AG04449 (cell line): ENCODE measurements at regions of chr14 and their contacts with region 1.

Region 1: GRCh38 chr14:24299255-24300195 is at the starts of genes DHRS1 and NOP9:
- DNase-seq: peak; percentile 24
- H3K4me3 ChIP-seq: peak within 1 kb of the TSS; percentile 99
- CTCF ChIP-seq: no peak

Region 2: GRCh38 chr14:24146978-24147760 is 152.4 kb before region 1 on chr14 and contains the start of gene RNF31:
- CTCF ChIA-PET with region 1: interaction called, 11 read pairs
- POLR2A ChIA-PET with region 1: no interaction called
- DNase-seq: peak; percentile 88
- H3K4me3 ChIP-seq: peak within 1 kb of the TSS; percentile 92
- CTCF ChIP-seq: no peak

Region 3: DNA sequence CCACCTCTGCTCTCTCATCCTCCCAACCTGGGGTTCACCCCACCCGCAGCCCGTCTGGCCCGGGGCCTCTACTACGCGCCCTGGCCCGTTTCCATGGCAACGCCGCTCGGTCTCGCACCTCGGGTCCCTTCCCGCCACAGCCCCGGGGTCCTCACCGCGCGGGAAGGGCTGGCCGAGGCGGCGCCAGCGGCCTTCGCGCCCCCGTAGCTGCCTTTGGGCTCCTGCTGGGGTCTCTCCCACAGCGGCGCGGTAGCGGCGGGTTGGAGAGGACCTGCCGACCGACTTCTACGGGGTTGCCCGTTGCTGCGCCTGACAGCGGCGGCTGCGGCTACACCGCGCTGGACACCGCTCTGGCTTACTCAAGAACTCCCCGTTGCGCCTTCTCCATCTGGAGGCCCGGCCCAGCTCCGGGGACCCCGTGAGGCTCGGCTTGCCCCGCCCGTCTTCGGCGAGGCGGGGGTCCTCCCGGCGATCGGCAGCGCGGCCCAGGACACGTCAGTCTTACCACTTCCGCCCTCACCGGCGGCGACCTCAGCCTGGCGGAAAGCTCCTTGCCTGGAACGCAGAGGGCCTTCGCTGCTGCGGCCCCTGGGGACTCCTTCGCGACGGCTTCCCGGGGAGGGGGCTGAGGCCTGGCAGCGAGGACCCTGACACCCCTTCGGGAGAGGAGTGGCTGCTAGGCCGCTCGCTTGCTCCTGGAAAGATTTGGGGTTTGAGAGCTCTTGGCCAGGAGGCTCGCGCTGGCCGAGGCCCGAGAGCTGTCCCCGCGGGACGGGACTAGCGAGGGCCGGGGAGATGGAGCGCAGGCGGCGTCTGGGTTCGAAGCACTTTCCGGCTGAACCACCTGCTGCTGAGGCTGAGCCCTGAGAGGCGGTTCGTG is 104.1 kb before region 1 on chr14 and contains the start of gene TM9SF1:
- CTCF ChIA-PET with region 1: interaction called, 21 read pairs
- POLR2A ChIA-PET with region 1: interaction called, 3 read pairs
- DNase-seq: peak; percentile 34
- H3K4me3 ChIP-seq: peak within 1 kb of the TSS; percentile 92
- CTCF ChIP-seq: no peak

Region 4: GRCh38 chr14:24224618-24225071 is 74.9 kb before region 1 on chr14:
- CTCF ChIA-PET with region 1: interaction called, 38 read pairs
- POLR2A ChIA-PET with region 1: interaction called, 3 read pairs
- DNase-seq: no peak
- H3K4me3 ChIP-seq: no peak overlapping the region
- CTCF ChIP-seq: no peak

Region 5: GRCh38 chr14:24271134-24271833 is 28.2 kb before region 1 on chr14 and contains the start of gene RABGGTA:
- CTCF ChIA-PET with region 1: interaction called, 46 read pairs
- POLR2A ChIA-PET with region 1: interaction called, 11 read pairs
- DNase-seq: no peak
- H3K4me3 ChIP-seq: peak within 1 kb of the TSS; percentile 98
- CTCF ChIP-seq: peak; percentile 97

Region 6: GRCh38 chr14:24347134-24347533 is 47.6 kb after region 1 on chr14:
- CTCF ChIA-PET with region 1: no interaction called
- POLR2A ChIA-PET with region 1: no interaction called
- DNase-seq: no peak
- H3K4me3 ChIP-seq: no peak overlapping the region
- CTCF ChIP-seq: no peak

Region 7: DNA sequence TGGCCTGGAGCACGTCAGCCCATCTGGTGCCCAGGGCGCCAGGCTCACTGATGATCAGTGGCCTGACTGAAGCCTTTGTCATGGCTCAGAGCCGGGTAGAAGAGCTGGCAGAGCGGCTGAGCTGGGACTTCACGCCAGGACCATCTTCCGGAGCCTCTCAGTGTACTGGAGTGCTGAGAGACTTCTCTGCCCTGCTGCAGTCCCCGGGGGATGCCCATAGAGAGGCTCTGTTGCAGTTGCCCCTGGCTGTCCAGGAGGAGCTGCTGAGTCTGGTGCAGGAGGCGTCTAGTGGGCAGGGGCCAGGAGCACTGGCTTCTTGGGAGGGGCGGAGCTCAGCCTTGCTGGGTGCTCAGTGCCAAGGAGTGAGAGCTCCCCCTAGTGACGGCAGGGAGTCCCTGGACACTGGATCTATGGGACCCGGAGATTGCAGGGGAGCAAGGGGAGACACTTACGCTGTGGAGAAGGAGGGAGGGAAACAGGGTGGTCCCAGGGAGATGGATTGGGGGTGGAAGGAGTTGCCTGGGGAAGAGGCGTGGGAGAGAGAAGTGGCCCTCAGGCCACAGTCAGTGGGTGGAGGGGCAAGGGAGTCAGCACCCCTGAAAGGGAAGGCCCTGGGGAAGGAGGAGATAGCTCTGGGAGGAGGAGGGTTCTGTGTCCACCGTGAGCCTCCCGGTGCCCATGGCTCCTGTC is 132.2 kb after region 1 on chr14:
- CTCF ChIA-PET with region 1: interaction called, 380 read pairs
- POLR2A ChIA-PET with region 1: interaction called, 3 read pairs
- DNase-seq: peak; percentile 55
- H3K4me3 ChIP-seq: peak overlapping the region; percentile 88
- CTCF ChIP-seq: peak; percentile 95

Region 8: DNA sequence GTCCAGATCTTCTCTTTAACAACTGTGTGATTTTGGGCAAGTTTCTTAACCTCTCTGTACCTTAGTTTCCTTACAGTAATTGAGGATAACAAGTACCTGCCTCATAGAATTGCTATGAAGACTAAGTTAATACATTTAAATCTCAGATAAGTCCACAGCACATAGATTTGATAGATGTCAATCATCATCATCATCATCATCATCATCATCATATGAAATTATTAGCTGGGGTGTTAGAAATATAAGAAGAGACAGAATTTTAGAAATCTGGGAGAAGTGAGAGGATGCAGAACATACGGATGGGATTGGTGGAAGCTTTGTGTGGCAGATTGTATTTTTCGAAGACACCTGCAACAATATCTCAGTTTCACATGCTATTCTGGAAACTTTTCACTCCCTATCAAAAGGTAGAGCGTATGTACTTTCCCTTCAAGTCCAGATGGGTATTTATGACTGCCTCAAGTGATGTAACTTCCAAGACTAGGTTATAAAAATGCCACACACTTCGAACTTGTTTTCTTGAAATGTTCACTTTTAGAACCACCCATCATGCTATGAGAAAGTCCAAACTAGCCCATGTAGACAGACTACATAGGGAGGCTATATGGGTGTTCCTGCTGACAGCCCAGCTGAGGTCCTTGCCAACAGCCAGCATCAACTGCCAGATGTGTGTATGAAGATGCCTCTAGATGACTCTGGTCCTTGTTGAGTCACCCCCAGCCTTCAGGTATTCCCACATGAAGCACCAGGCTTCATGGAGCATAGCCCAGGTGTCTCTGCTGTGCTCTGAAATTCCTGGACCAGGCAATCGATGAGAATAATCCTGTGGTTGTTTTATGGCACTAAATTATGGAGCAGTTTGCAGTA is 163.7 kb after region 1 on chr14:
- CTCF ChIA-PET with region 1: no interaction called
- POLR2A ChIA-PET with region 1: no interaction called
- DNase-seq: no peak
- H3K4me3 ChIP-seq: no peak overlapping the region
- CTCF ChIP-seq: no peak

Region 9: GRCh38 chr14:24542346-24542936 is 242.9 kb after region 1 on chr14:
- CTCF ChIA-PET with region 1: no interaction called
- POLR2A ChIA-PET with region 1: no interaction called
- DNase-seq: no peak
- H3K4me3 ChIP-seq: no peak overlapping the region
- CTCF ChIP-seq: no peak